Heart right ventricle (tissue), 16 donors: ENCODE measurements at regions of chr15 and their contacts with region 1.

Region 1: DNA sequence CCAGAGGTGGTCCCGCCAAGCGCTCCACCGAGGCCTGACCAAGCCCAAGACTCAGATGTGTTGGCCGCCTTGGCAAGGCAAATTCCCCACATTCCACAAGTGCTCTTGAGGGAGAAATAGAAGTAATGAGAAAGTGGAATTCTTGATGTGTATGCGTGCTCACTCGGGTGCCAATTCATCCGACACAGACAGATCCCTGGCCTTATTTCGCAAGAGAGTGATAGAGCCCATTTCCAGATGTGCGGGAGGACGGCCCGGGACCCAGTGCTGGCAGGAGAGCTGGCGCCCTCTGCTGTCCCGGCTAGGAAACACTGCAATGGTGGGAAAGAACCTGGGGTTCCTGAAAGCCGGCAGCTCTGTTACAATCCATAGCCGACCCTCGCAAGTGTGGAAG is 76.0 kb downstream of the HMG20A start:
- DNase-seq: peak; percentile 89
- ATAC-seq: peak; percentile 79 to 92 (median 85)
- H3K4me3 ChIP-seq: peak overlapping the region in 7 of 10 donors; percentile 14 to 34 (median 31)
- H3K27ac ChIP-seq: peak overlapping the region; percentile 80 to 96 (median 92)
- H3K4me1 ChIP-seq: peaks cover 34 to 97% (median 71%) of the 10 kb centered on the region in 9 donors
- H3K27me3 ChIP-seq: no peaks in the 10 kb centered on the region
- CTCF ChIP-seq: peak; percentile 94 to 98 (median 97)

Region 2: DNA sequence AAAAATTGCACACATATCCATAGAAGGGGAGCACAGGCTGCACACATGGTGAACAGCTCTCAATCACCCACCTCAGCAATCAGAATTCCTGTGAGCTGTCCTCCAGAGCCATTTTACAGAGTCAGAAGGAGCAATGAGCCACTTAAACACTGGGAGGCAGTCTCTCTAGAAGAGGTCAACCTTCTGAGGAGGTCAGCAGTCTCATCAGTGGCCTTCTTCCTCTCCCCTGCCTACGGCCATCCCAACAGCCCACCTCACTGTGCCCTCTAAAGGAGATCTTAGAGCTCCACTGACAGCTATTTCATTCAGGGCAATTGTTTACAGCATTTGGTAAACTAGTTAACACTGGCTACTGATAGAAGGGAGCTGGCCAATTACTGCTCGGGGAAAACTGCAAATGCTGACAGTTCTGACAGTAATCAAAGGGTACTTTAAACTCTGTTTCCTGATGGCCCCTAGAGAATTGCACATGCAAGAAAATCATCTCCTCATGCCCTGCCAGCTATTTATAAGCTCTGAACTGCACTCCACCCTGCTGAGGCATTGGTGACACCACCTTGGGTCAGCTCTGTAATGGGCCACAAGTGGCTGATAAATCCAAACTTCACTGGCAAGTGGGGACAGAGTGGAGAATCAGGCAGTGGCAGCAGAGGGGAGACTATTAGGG is 383.7 kb before region 1 on chr15:
- intact Hi-C with region 1: loop called in 6 of 10 experiments (anchors 2 to 5 kb)
- DNase-seq: no peak
- ATAC-seq: peak in 6 of 8 donors; percentile 26 to 63 (median 36)
- H3K4me3 ChIP-seq: no peak overlapping the region
- H3K27ac ChIP-seq: peak overlapping the region in 1 of 10 donors; percentile 6
- H3K4me1 ChIP-seq: peaks cover 1 to 51% (median 11%) of the 10 kb centered on the region in 9 donors
- H3K27me3 ChIP-seq: no peaks in the 10 kb centered on the region
- CTCF ChIP-seq: no peak

Region 3: DNA sequence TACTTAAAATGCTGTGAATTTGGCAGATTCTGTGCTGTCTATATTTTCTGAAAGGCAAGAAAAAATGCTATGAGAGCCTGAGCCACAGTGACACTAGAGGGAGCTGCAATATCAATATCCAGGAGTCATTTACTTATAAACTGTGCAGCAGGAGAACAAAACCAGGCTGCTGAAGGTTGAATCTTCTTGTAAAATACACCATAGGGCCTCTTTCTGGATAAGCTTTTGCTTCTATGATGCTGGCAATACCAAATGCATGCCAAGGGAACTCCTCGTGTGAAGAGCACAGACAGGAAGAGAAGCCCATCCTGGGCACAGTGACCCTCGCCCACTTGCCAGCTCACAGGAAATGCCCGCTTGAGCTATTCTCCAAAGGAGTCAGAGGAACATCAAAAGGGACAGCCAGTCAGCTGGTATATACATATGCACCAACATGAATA is 377.8 kb before region 1 on chr15:
- intact Hi-C with region 1: loop called in 7 of 10 experiments (anchors 2 to 10 kb)
- DNase-seq: peak in 1 of 2 donors; percentile 60
- ATAC-seq: peak in 6 of 8 donors; percentile 71 to 82 (median 79)
- H3K4me3 ChIP-seq: no peak overlapping the region
- H3K27ac ChIP-seq: peak overlapping the region in 2 of 10 donors; percentile 3 to 38
- H3K4me1 ChIP-seq: peaks cover 0 to 40% (median 16%) of the 10 kb centered on the region in 9 donors
- H3K27me3 ChIP-seq: no peaks in the 10 kb centered on the region
- CTCF ChIP-seq: peak; percentile 59 to 89 (median 75)

Region 4: GRCh38 chr15:77126529-77127326 is 370.0 kb before region 1 on chr15:
- intact Hi-C with region 1: loop called in 1 of 10 experiments (anchors 10 kb)
- DNase-seq: no peak
- ATAC-seq: peak; percentile 42 to 84 (median 73)
- H3K4me3 ChIP-seq: no peak overlapping the region
- H3K27ac ChIP-seq: peak overlapping the region in 5 of 10 donors; percentile 11 to 58 (median 43)
- H3K4me1 ChIP-seq: peaks cover 0 to 46% (median 26%) of the 10 kb centered on the region in 9 donors
- H3K27me3 ChIP-seq: no peaks in the 10 kb centered on the region
- CTCF ChIP-seq: no peak

Region 5: DNA sequence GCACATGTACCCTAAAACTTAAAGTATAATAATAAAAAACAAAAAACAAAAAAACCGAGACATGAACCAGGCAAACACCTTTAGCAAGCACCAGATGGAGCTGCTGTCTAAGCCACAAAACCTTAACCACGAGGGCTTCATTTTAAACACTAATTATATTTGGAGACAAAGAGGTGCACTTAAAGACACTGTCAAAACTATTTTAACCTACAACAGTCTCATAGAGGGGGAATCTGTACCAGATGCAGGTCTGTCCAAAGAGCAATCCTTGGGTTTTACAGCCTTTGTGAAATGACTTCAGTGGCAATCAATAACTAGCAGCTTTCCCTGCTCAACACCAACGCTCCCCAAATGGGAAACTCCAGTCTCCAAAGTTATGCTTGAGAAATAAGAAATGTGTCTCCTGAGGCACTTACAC is 310.1 kb before region 1 on chr15:
- intact Hi-C with region 1: loop called in 9 of 10 experiments (anchors 1 to 5 kb)
- DNase-seq: no peak
- ATAC-seq: peak in 7 of 8 donors; percentile 33 to 64 (median 43)
- H3K4me3 ChIP-seq: no peak overlapping the region
- H3K27ac ChIP-seq: peak overlapping the region; percentile 38 to 93 (median 80)
- H3K4me1 ChIP-seq: peaks cover 5 to 70% (median 55%) of the 10 kb centered on the region in 9 donors
- H3K27me3 ChIP-seq: no peaks in the 10 kb centered on the region
- CTCF ChIP-seq: peak; percentile 38 to 81 (median 63)

Region 6: DNA sequence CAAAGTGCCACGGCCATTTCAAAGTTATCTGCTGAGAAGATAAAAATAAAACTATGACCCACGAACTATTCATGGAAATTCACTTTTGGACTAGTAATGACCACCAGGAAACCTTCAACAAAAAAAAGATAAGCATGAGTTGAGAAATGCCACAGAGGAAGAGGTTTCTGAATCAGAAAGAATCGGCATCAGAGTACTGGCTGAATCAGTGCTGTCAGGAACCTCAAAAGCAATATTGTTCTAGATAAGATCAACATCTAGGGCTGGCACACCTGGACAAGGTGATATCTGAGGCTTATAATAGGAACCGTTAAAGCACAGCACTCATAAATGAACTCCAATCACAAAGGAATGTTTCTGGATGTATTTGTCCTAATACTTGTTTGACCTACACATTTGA is 149.5 kb before region 1 on chr15:
- intact Hi-C with region 1: loop called in 1 of 10 experiments (anchors 5 kb)
- DNase-seq: no peak
- ATAC-seq: peak in 3 of 8 donors; percentile 25 to 28 (median 27)
- H3K4me3 ChIP-seq: no peak overlapping the region
- H3K27ac ChIP-seq: peak overlapping the region in 5 of 10 donors; percentile 1 to 40 (median 6)
- H3K4me1 ChIP-seq: peaks cover 6 to 58% (median 40%) of the 10 kb centered on the region in 9 donors
- H3K27me3 ChIP-seq: no peaks in the 10 kb centered on the region
- CTCF ChIP-seq: no peak

Region 7: DNA sequence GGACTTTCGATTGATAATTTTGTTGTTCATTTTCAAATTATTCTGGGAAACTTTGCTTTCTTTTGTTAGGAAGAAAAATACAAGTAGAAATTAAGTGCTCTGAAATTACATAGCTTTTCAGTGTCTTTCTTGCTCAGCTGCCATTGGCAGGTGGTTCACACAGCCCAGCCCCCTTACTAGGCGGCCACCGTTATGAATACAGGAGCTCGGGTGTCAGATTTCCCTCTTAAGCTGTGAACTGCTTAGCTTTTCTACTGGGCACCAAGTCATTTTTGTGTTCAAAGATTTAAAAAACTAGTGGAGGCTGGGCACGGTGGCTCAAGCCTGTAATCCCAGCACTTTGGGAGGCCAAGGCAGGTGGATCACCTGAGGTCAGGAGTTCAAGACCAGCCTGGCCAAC is 20.8 kb before region 1 on chr15:
- intact Hi-C with region 1: no loop called
- DNase-seq: no peak
- ATAC-seq: peak in 3 of 8 donors; percentile 42 to 54 (median 43)
- H3K4me3 ChIP-seq: no peak overlapping the region
- H3K27ac ChIP-seq: peak overlapping the region in 2 of 10 donors; percentile 59 to 72
- H3K4me1 ChIP-seq: peaks cover 0 to 39% (median 20%) of the 10 kb centered on the region in 9 donors
- H3K27me3 ChIP-seq: no peaks in the 10 kb centered on the region
- CTCF ChIP-seq: no peak